Endothelial cell of umbilical vein (primary cell): ENCODE measurements at regions of chr1 and their contacts with region 1.

Region 1: DNA sequence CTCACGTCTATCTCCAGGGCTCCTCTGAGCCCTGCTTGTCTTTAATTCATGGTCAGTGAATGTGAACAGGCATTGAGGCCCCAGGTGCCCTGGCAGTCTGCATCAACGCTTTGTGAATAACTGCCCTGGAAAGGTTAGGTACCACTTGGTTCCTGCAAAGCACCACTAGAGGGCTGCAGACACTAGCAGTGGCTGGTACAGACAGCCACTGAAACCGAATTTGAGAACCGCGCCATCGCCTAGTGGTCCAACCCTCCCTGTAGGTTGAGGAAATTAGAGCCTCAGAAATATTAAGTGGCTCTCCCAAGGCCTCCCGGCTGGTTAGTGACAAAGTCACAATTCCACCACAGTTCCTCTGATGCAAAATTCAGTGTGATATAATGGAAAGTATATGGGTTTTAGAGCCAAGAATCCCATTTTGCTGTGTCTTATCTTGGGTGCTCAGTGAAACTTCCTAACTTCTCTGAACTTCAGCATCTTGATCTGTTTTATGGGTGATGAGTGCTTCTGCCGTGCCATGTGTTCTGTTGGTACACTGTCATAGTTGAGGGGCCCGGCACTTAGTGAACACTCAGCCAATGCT is 46.2 kb upstream of the BCL9 start:
- DNase-seq: peak; percentile 63
- H3K4me3 ChIP-seq: no peak overlapping the region
- H3K27ac ChIP-seq: no peak overlapping the region
- H3K4me1 ChIP-seq: peaks cover 3% of the 10 kb centered on the region
- H3K27me3 ChIP-seq: peaks cover 3 to 9% of the 10 kb centered on the region in 2 experiments
- CTCF ChIP-seq: peak; percentile 84 to 85
- POLR2A ChIP-seq: no peak

Region 2: DNA sequence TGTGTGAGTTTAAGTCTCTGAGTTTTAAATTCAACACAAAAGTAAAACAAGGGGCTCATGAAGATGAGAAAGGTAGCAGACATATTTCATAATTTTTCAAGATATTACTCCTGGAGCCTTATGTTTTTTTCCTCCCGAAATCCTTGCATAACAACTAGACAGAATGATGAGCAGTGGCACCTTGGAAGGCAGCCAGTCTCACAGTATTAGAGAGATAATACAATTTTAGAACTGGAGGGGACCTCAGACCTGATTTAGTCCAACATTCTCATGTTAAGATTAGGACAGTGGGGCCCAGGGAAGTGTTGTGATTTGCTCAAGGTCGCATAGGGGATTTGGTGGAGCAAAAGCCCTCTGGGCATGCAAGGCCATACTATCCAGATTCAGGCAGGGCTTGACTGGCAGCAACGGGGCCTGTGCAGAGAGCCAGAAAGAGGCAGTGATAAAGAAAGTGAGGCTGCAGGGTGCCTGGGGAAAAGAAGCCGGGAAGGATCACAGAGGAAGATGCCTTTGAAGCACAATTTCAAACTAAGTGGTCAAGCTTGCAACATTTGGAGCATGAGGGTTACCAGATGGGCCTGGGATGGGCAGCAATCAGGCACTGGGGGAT is 14.8 kb after region 1 on chr1:
- CTCF ChIA-PET with region 1: interaction called, 19 read pairs
- POLR2A ChIA-PET with region 1: no interaction called
- dilution Hi-C with region 1: no loop called
- intact Hi-C with region 1: no loop called
- DNase-seq: no peak
- H3K4me3 ChIP-seq: no peak overlapping the region
- H3K27ac ChIP-seq: no peak overlapping the region
- H3K4me1 ChIP-seq: no peaks in the 10 kb centered on the region
- H3K27me3 ChIP-seq: peaks cover 0 to 16% of the 10 kb centered on the region in 2 experiments
- CTCF ChIP-seq: no peak
- POLR2A ChIP-seq: no peak

Region 3: GRCh38 chr1:147558045-147558444 is 63.0 kb after region 1 on chr1:
- CTCF ChIA-PET with region 1: no interaction called
- POLR2A ChIA-PET with region 1: no interaction called
- dilution Hi-C with region 1: no loop called
- intact Hi-C with region 1: no loop called
- DNase-seq: no peak
- H3K4me3 ChIP-seq: no peak overlapping the region
- H3K27ac ChIP-seq: no peak overlapping the region
- H3K4me1 ChIP-seq: no peaks in the 10 kb centered on the region
- H3K27me3 ChIP-seq: no peaks in the 10 kb centered on the region
- CTCF ChIP-seq: no peak
- POLR2A ChIP-seq: no peak

Region 4: GRCh38 chr1:147599362-147600118 is 104.5 kb after region 1 on chr1:
- CTCF ChIA-PET with region 1: interaction called, 25 read pairs
- POLR2A ChIA-PET with region 1: interaction called, 3 read pairs
- dilution Hi-C with region 1: no loop called
- intact Hi-C with region 1: loop called (anchors 1 kb)
- DNase-seq: peak; percentile 98
- H3K4me3 ChIP-seq: peak overlapping the region; percentile 76 to 91 (median 78)
- H3K27ac ChIP-seq: no peak overlapping the region
- H3K4me1 ChIP-seq: peaks cover 13% of the 10 kb centered on the region
- H3K27me3 ChIP-seq: peaks cover 3 to 4% of the 10 kb centered on the region in 2 experiments
- CTCF ChIP-seq: no peak
- POLR2A ChIP-seq: no peak

Region 5: DNA sequence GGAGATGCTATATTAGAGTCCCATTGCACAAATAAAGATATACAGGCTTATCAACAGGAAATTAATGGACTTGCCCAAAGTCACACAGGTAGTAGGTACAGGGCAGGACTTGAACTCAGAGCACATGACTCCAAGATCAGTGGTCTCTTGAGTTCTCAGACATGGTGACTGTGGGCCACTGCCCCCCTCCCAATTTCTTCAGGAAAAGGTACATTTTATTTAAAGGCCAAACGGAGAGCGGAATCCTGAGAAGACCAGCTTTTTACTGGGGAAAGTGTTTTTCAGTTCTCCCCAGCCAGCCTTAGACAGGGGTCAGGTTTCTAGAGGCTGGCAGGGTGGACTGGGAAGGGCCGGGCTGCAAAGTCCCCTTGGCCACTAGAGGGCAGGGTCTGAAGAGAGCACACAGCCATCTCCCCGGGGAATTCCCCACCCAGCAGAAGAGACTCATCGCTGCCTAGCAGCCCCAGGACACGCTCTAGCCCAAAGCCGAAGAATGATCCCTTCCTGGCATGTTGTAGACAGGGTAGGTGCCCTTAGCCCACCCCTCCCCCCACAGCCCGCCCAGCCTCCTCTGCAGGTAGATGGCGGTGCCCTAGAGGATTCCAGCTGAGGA is 145.6 kb after region 1 on chr1:
- CTCF ChIA-PET with region 1: interaction called, 24 read pairs
- POLR2A ChIA-PET with region 1: no interaction called
- dilution Hi-C with region 1: no loop called
- intact Hi-C with region 1: loop called (anchors 1 kb)
- DNase-seq: peak; percentile 60
- H3K4me3 ChIP-seq: no peak overlapping the region
- H3K27ac ChIP-seq: no peak overlapping the region
- H3K4me1 ChIP-seq: no peaks in the 10 kb centered on the region
- H3K27me3 ChIP-seq: no peaks in the 10 kb centered on the region
- CTCF ChIP-seq: peak; percentile 94 to 96
- POLR2A ChIP-seq: no peak